HEK293 (cell line): ENCODE measurements at regions of chr17 and their contacts with region 1.

Region 1: GRCh38 chr17:21511363-21512198 is 135.4 kb downstream of the KCNJ12 start:
- H3K4me3 ChIP-seq: peak overlapping the region; percentile 37
- H3K27ac ChIP-seq: peak overlapping the region; percentile 57; the same call in 1 of the 2 replicates
- H3K4me1 ChIP-seq: 0 out of 2 replicates have a peak, but pooled peaks cover 5% of the 10 kb centered on the region
- CTCF ChIP-seq: peak; percentile 85

Region 2: DNA sequence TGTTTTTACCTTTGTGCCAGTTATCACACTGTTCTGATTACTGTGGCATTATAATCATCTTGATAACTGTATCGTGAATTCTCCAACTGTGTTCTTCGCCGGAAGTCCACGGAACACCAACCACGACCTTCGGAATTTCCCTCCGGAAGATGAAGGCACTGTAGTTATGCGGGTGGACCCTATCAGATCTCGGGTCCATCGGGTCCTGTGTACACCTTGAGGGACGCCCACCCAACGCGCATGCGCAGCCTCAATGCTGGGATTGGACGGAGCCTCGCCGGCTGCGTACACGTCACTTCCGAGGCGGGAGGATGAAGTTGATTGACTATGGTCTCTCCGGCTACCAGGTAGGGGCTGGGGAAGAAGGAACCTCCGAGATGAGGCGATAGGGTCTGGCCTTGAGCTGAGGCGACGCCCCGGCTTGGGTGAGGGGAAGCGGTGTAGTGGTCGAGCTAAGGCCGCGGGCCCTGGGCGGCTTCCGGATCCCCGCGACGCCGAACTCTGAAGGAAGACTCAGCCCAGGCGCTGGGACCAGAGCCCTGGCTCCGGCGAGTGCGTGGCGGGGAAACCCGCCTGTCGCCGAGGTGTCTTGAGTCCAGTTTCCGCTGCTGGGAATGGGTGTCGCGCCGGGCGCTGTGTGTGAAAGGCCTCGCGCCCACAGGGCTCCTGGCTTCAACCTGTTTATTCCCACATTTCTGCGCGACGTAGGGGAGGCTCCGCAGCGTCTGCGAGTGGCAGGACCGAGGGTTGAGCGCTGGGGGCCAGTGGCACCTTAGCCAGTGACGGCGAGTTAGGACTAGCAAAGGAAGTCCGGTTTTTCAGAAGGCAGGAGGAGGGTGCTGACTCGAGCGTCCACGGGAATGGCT is 384.7 kb before region 1 on chr17 and contains the start of gene DHRS7B:
- CTCF ChIA-PET with region 1: interaction called, 14 read pairs
- POLR2A ChIA-PET with region 1: no interaction called
- H3K4me3 ChIP-seq: peak within 1 kb of the TSS; percentile 90
- H3K27ac ChIP-seq: peak within 1 kb of the TSS; percentile 80
- H3K4me1 ChIP-seq: peaks cover 2% of the 10 kb centered on the region
- CTCF ChIP-seq: peak; percentile 33; the same call in 1 of the 2 replicates

Region 3: DNA sequence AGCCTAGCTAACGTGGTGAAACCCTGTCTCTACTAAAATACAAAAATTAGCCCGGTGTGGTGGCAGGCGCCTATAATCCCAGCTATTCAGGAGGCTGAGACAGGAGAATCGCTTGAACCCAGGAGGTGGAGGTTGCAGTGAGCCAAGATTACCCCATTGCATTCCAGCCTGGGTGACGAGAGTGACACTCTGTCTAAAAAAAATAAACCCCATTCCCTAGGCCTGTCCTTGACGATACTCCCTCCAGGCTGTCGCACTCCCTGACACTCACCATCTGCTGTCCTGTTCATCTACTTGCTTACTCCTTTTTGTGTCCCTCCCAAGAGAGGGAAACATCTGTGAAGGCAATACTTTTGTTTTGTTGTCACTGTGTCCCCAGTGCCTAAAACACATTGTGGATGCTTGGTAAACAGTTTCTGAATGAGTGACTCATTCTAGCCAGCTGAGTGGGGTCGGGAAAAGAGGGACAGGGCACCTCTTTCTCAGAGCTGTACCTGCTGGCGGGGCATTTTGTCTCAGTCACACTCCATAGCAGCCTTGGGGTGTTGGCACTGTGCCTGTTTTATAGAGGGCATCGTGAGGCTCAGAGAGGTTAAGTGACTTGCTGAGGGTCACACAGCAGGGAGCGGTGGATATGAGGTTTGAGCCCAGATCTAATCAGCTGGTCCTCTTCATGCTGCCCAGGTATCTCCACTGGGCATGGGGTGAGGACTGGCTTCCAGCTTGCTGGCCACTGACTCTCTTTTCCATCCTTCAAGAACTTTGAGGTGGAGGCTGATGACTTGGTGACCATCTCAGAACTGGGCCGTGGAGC is 211.6 kb before region 1 on chr17:
- CTCF ChIA-PET with region 1: interaction called, 10 read pairs
- POLR2A ChIA-PET with region 1: no interaction called
- H3K4me3 ChIP-seq: no peak overlapping the region
- H3K27ac ChIP-seq: no peak overlapping the region
- H3K4me1 ChIP-seq: no peaks in the 10 kb centered on the region
- CTCF ChIP-seq: no peak

Region 4: DNA sequence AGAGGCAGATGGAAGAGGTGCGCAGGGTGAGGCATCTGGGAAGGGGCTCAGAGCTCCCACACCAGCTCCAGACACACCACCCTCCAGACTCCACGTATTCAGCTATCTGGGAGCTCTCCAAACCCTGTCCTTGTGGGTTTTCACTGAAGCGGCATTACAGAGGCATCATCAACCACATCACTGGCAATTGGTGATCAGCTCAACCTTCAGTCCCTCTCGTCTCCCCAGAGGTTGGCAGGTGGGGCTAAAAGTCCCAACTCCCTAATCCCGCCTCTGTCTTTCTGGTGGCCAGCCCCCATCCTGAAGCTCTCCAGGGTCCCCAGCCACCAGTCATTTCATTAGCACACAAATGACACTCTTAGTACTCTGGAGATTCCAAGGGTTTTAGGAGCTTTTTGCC is 11.5 kb before region 1 on chr17:
- CTCF ChIA-PET with region 1: interaction called, 17 read pairs
- POLR2A ChIA-PET with region 1: no interaction called
- H3K4me3 ChIP-seq: no peak overlapping the region
- H3K27ac ChIP-seq: no peak overlapping the region
- H3K4me1 ChIP-seq: no peaks in the 10 kb centered on the region
- CTCF ChIP-seq: no peak

Region 5: DNA sequence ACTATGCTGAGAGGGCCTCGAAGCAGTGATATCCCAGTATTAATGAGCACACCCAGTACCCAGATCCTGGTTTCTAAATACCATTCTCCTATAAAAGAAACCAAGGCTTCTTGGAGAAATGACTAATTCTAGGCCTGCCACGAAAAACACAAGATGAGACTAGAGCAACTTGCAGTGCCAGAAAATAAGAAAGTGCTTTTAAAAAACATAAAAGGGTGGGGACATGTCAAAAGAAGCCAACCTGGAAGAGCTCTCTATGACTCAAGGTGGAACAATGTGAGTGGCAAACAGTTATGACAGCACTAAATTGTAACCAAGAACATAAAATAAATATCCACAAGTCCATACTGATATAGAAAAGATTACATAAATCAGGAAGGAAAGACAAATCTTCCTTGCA is 27.6 kb after region 1 on chr17:
- CTCF ChIA-PET with region 1: no interaction called
- POLR2A ChIA-PET with region 1: no interaction called
- H3K4me3 ChIP-seq: no peak overlapping the region
- H3K27ac ChIP-seq: no peak overlapping the region
- H3K4me1 ChIP-seq: no peaks in the 10 kb centered on the region; the same call in 1 of the 2 replicates
- CTCF ChIP-seq: no peak